Activated B cell treated with CpG ODN at 0.5 μM for 24 hours (primary cell): ENCODE measurements at regions of chr6 and their contacts with region 1.

Region 1: DNA sequence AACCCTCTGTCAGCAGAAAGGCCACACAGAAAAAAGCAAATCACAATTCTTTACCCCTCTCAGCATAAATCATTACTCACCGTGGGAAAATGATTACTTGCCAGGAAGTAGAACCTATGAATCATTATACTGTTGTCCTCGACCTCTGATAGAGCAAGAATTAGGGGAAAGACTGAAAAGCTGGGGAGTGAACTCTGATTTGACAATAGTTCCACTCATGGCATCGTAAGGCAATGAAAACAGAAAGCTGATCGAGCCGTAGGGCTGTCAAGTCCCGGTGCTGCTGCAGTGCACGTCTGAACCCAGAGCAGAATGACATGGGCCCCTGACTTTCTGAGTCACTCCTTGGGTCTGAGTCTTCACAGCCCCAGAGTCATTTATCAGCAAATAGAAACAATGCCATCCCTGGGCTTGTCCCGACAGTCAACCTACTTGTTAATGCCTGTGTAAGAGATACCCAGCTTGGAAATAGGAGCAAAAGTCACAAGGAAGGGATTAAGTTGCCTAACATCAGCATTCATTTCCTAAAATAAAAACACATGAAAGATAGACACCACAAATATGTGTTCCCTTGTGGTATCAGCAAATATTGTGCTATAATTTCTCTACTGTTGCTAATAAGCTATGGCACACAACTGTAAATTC is 224.8 kb upstream of the MARCKS start:
- DNase-seq: no peak
- ATAC-seq: peak; percentile 32
- H3K4me3 Mint-ChIP-seq: peak overlapping the region; percentile 87
- H3K27ac Mint-ChIP-seq: peak overlapping the region; percentile 99
- H3K4me1 Mint-ChIP-seq: peaks cover 88% of the 10 kb centered on the region
- H3K27me3 Mint-ChIP-seq: no peaks in the 10 kb centered on the region
- CTCF ChIP-seq: no peak

Region 2: DNA sequence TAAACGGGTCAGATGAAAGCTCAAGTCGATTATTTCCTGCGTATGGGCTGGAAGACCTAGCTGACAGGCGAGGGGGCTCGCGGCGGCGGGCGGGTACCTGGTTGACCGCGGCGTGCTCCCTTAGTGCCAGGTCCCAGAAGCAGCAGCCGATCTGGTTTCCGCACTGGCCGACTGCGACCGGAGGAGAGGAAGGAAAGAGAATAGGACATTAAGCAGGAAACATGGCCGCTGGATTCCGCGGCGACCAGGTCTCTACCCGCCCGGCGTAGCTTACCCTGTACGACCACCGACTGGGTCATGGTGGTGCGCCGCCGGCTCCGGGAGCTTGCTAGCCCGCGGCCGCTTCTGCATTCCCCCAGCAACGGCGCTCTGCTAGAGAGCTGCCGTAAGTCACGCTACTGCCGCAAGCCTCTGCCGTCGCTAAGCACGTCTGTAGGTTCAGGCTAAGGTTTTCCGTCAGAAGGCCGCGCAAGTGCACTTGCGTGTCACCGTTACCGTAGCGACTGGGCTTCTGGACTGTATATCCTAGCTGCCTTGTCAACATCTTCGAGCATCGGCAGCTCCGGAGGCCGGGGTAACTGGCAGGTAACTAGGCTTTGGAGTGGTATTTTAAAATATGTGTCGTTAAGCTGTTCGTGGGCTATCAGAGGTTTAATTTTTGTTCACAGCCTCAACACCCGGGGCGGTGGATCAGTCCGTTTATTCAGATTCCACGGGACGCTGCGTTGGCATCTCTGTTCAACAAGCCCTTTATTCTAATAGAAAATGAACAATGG is 1545.0 kb before region 1 on chr6 and contains the starts of genes FAM229B and TUBE1:
- CTCF ChIA-PET with region 1: no interaction called
- POLR2A ChIA-PET with region 1: no interaction called
- intact Hi-C with region 1: loop called (anchors 2 kb)
- DNase-seq: peak; percentile 74
- ATAC-seq: peak; percentile 96
- H3K4me3 Mint-ChIP-seq: no peak within 1 kb of the TSS
- H3K27ac Mint-ChIP-seq: no peak within 1 kb of the TSS
- H3K4me1 Mint-ChIP-seq: no peaks in the 10 kb centered on the region
- H3K27me3 Mint-ChIP-seq: peaks cover 14% of the 10 kb centered on the region
- CTCF ChIP-seq: no peak
- total RNA-seq, gene FAM229B: 2.0 and 2.6 TPM in 2 replicates
- total RNA-seq, gene TUBE1: 24.1 and 28.0 TPM in 2 replicates

Region 3: GRCh38 chr6:113306552-113307145 is 325.7 kb before region 1 on chr6:
- CTCF ChIA-PET with region 1: interaction called, 8 read pairs
- POLR2A ChIA-PET with region 1: interaction called, 4 read pairs
- intact Hi-C with region 1: loop called (anchors 1 kb)
- DNase-seq: peak; percentile 51
- ATAC-seq: peak; percentile 97
- H3K4me3 Mint-ChIP-seq: no peak overlapping the region
- H3K27ac Mint-ChIP-seq: no peak overlapping the region
- H3K4me1 Mint-ChIP-seq: peaks cover 6% of the 10 kb centered on the region
- H3K27me3 Mint-ChIP-seq: no peaks in the 10 kb centered on the region
- CTCF ChIP-seq: peak; percentile 31

Region 4: GRCh38 chr6:113359155-113360140 is 272.9 kb before region 1 on chr6:
- CTCF ChIA-PET with region 1: no interaction called
- POLR2A ChIA-PET with region 1: no interaction called
- intact Hi-C with region 1: no loop called
- DNase-seq: no peak
- ATAC-seq: no peak
- H3K4me3 Mint-ChIP-seq: no peak overlapping the region
- H3K27ac Mint-ChIP-seq: no peak overlapping the region
- H3K4me1 Mint-ChIP-seq: no peaks in the 10 kb centered on the region
- H3K27me3 Mint-ChIP-seq: peaks cover 3% of the 10 kb centered on the region
- CTCF ChIP-seq: no peak

Region 5: GRCh38 chr6:113481458-113481857 is 150.9 kb before region 1 on chr6:
- CTCF ChIA-PET with region 1: no interaction called
- POLR2A ChIA-PET with region 1: no interaction called
- intact Hi-C with region 1: no loop called
- DNase-seq: no peak
- ATAC-seq: no peak
- H3K4me3 Mint-ChIP-seq: no peak overlapping the region
- H3K27ac Mint-ChIP-seq: no peak overlapping the region
- H3K4me1 Mint-ChIP-seq: no peaks in the 10 kb centered on the region
- H3K27me3 Mint-ChIP-seq: no peaks in the 10 kb centered on the region
- CTCF ChIP-seq: no peak

Region 6: DNA sequence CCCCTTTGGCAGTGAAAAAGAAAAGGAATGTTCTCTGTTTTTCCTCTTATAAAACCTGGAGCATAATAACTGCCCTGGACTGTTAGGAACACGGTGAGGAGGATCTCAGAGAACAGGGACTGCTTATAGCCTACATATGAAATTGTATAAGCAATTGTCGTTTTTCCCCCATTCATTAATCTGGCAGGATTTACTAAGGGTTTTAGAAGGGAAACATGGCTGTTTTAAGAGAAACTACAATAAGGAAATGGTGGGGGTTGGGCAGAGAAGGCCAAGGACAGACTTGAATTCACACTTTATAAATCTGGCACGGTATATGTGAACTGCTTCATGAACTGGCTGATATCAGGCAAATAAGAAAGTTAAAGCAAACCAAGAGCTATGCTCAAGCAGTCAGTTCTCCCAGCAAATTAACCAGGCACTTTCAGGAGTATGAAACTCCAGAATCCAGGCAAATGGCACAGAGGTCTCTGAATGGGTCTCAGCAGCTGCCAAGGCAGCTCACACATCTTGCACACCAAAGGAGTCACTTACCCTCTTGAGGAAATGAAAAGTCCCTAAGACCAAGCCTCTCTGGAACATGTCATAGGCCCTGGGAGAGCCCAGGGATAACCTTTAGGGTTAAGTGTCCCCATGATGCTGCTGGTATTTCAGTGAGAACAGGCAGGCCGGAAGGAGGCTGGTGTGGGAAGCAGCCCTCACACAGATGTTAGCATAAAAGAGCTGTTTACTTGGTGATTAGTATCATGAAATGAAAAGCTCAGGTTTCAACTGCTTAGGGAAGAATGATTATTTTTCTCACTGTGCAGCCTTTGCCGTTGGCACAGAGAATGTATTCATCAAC is 35.7 kb before region 1 on chr6:
- CTCF ChIA-PET with region 1: no interaction called
- POLR2A ChIA-PET with region 1: interaction called, 3 read pairs
- intact Hi-C with region 1: loop called (anchors 2 kb)
- DNase-seq: no peak
- ATAC-seq: peak; percentile 10
- H3K4me3 Mint-ChIP-seq: no peak overlapping the region
- H3K27ac Mint-ChIP-seq: no peak overlapping the region
- H3K4me1 Mint-ChIP-seq: peaks cover 38% of the 10 kb centered on the region
- H3K27me3 Mint-ChIP-seq: no peaks in the 10 kb centered on the region
- CTCF ChIP-seq: no peak

Region 7: GRCh38 chr6:113662688-113663333 is 30.5 kb after region 1 on chr6:
- CTCF ChIA-PET with region 1: no interaction called
- POLR2A ChIA-PET with region 1: interaction called, 5 read pairs
- intact Hi-C with region 1: loop called (anchors 1 kb)
- DNase-seq: no peak
- ATAC-seq: peak; percentile 90
- H3K4me3 Mint-ChIP-seq: peak overlapping the region; percentile 5
- H3K27ac Mint-ChIP-seq: no peak overlapping the region
- H3K4me1 Mint-ChIP-seq: peaks cover 21% of the 10 kb centered on the region
- H3K27me3 Mint-ChIP-seq: no peaks in the 10 kb centered on the region
- CTCF ChIP-seq: no peak

Region 8: GRCh38 chr6:113701552-113702254 is 69.4 kb after region 1 on chr6:
- CTCF ChIA-PET with region 1: no interaction called
- POLR2A ChIA-PET with region 1: no interaction called
- intact Hi-C with region 1: no loop called
- DNase-seq: no peak
- ATAC-seq: no peak
- H3K4me3 Mint-ChIP-seq: no peak overlapping the region
- H3K27ac Mint-ChIP-seq: no peak overlapping the region
- H3K4me1 Mint-ChIP-seq: peaks cover 10% of the 10 kb centered on the region
- H3K27me3 Mint-ChIP-seq: no peaks in the 10 kb centered on the region
- CTCF ChIP-seq: no peak

Region 9: DNA sequence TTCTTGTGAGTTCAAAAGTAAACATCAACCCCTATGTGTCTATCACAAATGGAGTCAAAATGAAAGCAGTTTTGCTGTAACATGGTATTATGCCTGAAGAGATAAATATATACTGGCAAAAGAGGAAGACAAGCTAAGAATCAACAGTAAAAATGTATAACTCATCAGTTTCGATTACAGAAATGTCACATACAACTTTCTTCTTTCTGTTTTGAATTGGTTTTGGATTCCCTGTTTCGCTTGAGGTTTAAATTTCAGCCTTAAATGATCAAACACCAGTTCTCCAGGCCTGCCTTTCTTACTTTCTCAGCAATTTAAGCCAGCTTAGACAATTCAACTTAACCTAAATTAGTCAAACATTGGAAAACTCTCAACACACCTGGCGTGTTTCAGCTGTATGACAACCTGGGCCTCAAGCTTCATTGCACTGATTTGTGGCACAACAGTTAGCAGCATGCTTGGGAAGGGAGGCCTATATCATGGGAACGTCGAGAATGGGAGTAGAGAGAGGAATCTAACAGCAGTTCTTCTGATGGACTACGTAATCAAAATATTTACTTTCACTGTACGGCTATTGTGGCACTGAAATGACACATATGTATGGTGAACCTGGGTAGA is 172.9 kb after region 1 on chr6:
- CTCF ChIA-PET with region 1: no interaction called
- POLR2A ChIA-PET with region 1: interaction called, 10 read pairs
- intact Hi-C with region 1: loop called (anchors 1 kb)
- DNase-seq: no peak
- ATAC-seq: peak; percentile 53
- H3K4me3 Mint-ChIP-seq: peak overlapping the region; percentile 52
- H3K27ac Mint-ChIP-seq: peak overlapping the region; percentile 67
- H3K4me1 Mint-ChIP-seq: peaks cover 56% of the 10 kb centered on the region
- H3K27me3 Mint-ChIP-seq: no peaks in the 10 kb centered on the region
- CTCF ChIP-seq: no peak

Region 10: GRCh38 chr6:114068116-114068515 is 435.8 kb after region 1 on chr6:
- CTCF ChIA-PET with region 1: no interaction called
- POLR2A ChIA-PET with region 1: no interaction called
- intact Hi-C with region 1: no loop called
- DNase-seq: no peak
- ATAC-seq: no peak
- H3K4me3 Mint-ChIP-seq: no peak overlapping the region
- H3K27ac Mint-ChIP-seq: no peak overlapping the region
- H3K4me1 Mint-ChIP-seq: no peaks in the 10 kb centered on the region
- H3K27me3 Mint-ChIP-seq: peaks cover 4% of the 10 kb centered on the region
- CTCF ChIP-seq: no peak